ENCODE measurements at regions of chr3 and their contacts with region 1.

Region 1: GRCh38 chr3:180912304-180913296 is at the start of gene FXR1:
- DNase-seq: peak; percentile 94
- ATAC-seq: peak; percentile 95
- H3K4me3 Mint-ChIP-seq: peak within 1 kb of the TSS; percentile 93
- H3K27ac Mint-ChIP-seq: peak within 1 kb of the TSS; percentile 94
- H3K4me1 Mint-ChIP-seq: peaks cover 46% of the 10 kb centered on the region
- H3K27me3 Mint-ChIP-seq: no peaks in the 10 kb centered on the region
- total RNA-seq, gene FXR1: 120 to 134 TPM

Region 2: GRCh38 chr3:180601688-180602666 is 310.6 kb before region 1 on chr3 and contains the start of gene TTC14:
- CTCF ChIA-PET with region 1: interaction called, 6 read pairs
- POLR2A ChIA-PET with region 1: interaction called, 15 read pairs
- DNase-seq: peak; percentile 96
- ATAC-seq: peak; percentile 94
- H3K4me3 Mint-ChIP-seq: peak within 1 kb of the TSS; percentile 98
- H3K27ac Mint-ChIP-seq: peak within 1 kb of the TSS; percentile 99
- H3K4me1 Mint-ChIP-seq: peaks cover 28% of the 10 kb centered on the region
- H3K27me3 Mint-ChIP-seq: peaks cover 10% of the 10 kb centered on the region
- total RNA-seq, gene TTC14: 53.5 to 65.5 TPM

Region 3: DNA sequence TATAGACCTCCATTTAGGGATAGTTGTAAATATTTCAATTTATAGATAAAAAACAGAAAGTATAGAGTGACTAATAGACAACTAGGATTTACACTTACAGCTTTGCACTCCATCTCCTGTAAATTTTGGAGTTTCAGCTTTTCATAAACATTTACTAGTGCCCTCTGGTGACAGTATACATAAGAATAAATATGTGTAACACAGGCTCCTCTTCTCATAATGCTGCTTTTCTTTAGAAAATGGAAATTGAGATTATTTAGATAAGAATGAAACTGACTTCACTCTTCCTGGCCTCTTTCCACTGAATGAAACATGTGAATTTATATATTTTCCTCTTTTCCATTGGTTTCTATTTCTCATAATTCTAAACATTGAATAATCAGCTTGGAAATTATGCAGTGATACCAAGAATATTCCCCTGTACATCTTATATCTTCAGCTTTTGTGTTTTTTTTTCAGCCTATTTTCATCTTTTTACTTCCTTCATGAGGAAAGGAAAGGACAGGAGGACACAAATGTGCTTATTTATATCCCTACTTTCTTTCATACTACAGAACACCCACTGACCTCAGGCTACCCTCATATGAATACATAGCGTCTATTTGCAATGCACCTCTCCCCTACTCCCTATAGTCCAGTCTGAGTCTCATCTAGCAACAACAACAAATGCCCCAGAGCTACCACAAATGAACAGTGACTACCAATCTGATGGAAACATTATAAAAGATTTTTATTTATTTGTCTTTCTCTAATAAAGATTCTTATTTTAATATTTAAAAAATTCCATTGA is 130.2 kb before region 1 on chr3:
- CTCF ChIA-PET with region 1: no interaction called
- POLR2A ChIA-PET with region 1: no interaction called
- DNase-seq: no peak
- ATAC-seq: no peak
- H3K4me3 Mint-ChIP-seq: no peak overlapping the region
- H3K27ac Mint-ChIP-seq: no peak overlapping the region
- H3K4me1 Mint-ChIP-seq: no peaks in the 10 kb centered on the region
- H3K27me3 Mint-ChIP-seq: no peaks in the 10 kb centered on the region